GM12878 (cell line): ENCODE measurements at regions of chr10 and their contacts with region 1.

Region 1: GRCh38 chr10:87861953-87862678 is 1.2 kb downstream of the KLLN start:
- DNase-seq: peak; percentile 95
- ATAC-seq: peak; percentile 55
- H3K4me3 ChIP-seq: peak overlapping the region; percentile 84
- H3K27ac ChIP-seq: peak overlapping the region; percentile 98
- H3K4me1 ChIP-seq: peaks cover 8% of the 10 kb centered on the region
- H3K27me3 ChIP-seq: no peaks in the 10 kb centered on the region
- CTCF ChIP-seq: no peak
- EP300 ChIP-seq: peak in 1 of 2 experiments; percentile 72; a peak in 2 of 4 replicates
- POLR2A ChIP-seq: peak; percentile 87
- RAD21 ChIP-seq: peak; percentile 37

Region 2: GRCh38 chr10:87635610-87636312 is 226.4 kb before region 1 on chr10:
- CTCF ChIA-PET with region 1: no interaction called
- POLR2A ChIA-PET with region 1: no interaction called
- RAD21 ChIA-PET with region 1: no interaction called
- SMC1A ChIA-PET with region 1: no interaction called
- in situ Hi-C with region 1: no loop called
- intact Hi-C with region 1: no loop called
- DNase-seq: peak; percentile 62
- ATAC-seq: peak; percentile 96
- H3K4me3 ChIP-seq: no peak overlapping the region
- H3K27ac ChIP-seq: no peak overlapping the region
- H3K4me1 ChIP-seq: no peaks in the 10 kb centered on the region
- H3K27me3 ChIP-seq: no peaks in the 10 kb centered on the region
- CTCF ChIP-seq: no peak
- EP300 ChIP-seq: no peak
- POLR2A ChIP-seq: no peak
- RAD21 ChIP-seq: no peak; the same call in 1 of the 2 replicates

Region 3: GRCh38 chr10:87817609-87818504 is 44.3 kb before region 1 on chr10 and contains the start of gene ATAD1:
- CTCF ChIA-PET with region 1: interaction called, 5 read pairs
- POLR2A ChIA-PET with region 1: interaction called, 17 read pairs
- RAD21 ChIA-PET with region 1: interaction called, 12 read pairs
- SMC1A ChIA-PET with region 1: interaction called, 7 read pairs
- in situ Hi-C with region 1: no loop called
- intact Hi-C with region 1: no loop called
- DNase-seq: peak; percentile 76
- ATAC-seq: peak; percentile 87
- H3K4me3 ChIP-seq: peak within 1 kb of the TSS; percentile 94
- H3K27ac ChIP-seq: peak within 1 kb of the TSS; percentile 98
- H3K4me1 ChIP-seq: peaks cover 4% of the 10 kb centered on the region; the same call in 1 of the 2 replicates
- H3K27me3 ChIP-seq: no peaks in the 10 kb centered on the region
- CTCF ChIP-seq: peak; percentile 22 to 32 (median 29); a peak in 5 of 6 replicates
- EP300 ChIP-seq: no peak
- POLR2A ChIP-seq: peak; percentile 88
- RAD21 ChIP-seq: no peak
- polyA plus RNA-seq, gene ATAD1: 33.6 to 35.0 TPM

Region 4: DNA sequence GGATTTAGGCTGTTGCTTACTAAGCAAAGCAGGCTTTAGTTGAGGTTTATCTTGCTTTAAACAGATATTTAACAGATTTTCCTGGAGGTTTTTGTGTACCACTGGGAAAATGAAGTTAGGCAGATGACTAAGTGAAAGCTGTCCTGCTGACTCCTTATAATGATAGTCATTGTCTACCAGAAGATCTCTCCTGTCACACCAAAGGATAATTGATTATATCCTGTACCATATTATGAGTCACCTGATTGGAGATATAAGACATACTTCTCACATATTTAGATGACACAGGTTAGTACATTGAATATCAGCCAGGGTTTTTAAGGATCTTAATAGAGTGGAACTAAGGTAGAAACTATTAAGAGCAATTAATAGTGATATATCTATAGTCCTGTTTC is 69.7 kb after region 1 on chr10:
- CTCF ChIA-PET with region 1: interaction called, 4 read pairs
- POLR2A ChIA-PET with region 1: interaction called, 6 read pairs
- RAD21 ChIA-PET with region 1: interaction called, 9 read pairs
- SMC1A ChIA-PET with region 1: interaction called, 13 read pairs
- in situ Hi-C with region 1: no loop called
- intact Hi-C with region 1: loop called (anchors 5 kb)
- DNase-seq: no peak
- ATAC-seq: peak; percentile 42
- H3K4me3 ChIP-seq: no peak overlapping the region
- H3K27ac ChIP-seq: peak overlapping the region; percentile 71
- H3K4me1 ChIP-seq: peaks cover 39% of the 10 kb centered on the region
- H3K27me3 ChIP-seq: no peaks in the 10 kb centered on the region
- CTCF ChIP-seq: no peak
- EP300 ChIP-seq: no peak
- POLR2A ChIP-seq: no peak
- RAD21 ChIP-seq: no peak

Region 5: DNA sequence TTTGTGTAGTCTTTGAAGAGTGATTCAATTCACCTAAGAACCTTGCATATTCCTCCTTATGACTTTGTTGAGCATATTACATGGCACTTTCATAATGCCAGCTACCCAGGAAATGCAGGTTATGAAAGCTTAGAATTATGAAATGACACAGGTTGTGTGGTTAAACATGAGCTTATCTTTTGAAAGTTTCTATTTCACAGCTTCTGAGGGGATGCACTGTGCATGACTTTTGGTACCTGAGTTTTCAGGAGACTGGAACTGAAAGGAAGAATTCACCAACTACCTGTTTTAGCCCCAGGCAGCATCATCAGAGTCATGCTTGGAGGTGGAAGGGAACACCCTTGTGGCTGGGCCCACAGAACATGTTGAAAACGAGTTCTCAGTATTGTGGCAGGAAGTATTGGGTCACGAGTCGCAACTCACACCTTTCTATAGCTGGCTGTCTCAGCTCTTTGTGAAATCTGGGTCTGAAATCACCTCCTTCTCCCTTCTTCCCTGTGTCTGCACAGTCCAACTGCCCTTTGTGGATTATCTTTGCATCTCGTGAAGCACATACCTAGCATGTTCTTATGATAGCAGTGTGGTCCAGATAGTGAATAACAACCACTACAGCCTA is 229.5 kb after region 1 on chr10:
- CTCF ChIA-PET with region 1: interaction called, 8 read pairs
- POLR2A ChIA-PET with region 1: interaction called, 7 read pairs
- RAD21 ChIA-PET with region 1: interaction called, 35 read pairs
- SMC1A ChIA-PET with region 1: interaction called, 31 read pairs
- in situ Hi-C with region 1: no loop called
- intact Hi-C with region 1: loop called (anchors 1 kb)
- DNase-seq: peak; percentile 98
- ATAC-seq: peak; percentile 88
- H3K4me3 ChIP-seq: 0 out of 2 replicates have a peak overlapping the region, but pooled peaks have one; percentile 20
- H3K27ac ChIP-seq: peak overlapping the region; percentile 97
- H3K4me1 ChIP-seq: peaks cover 31% of the 10 kb centered on the region
- H3K27me3 ChIP-seq: no peaks in the 10 kb centered on the region
- CTCF ChIP-seq: peak in 1 of 3 experiments; percentile 23; a peak in 1 of 6 replicates
- EP300 ChIP-seq: peak; percentile 92 to 94
- POLR2A ChIP-seq: no peak
- RAD21 ChIP-seq: peak; percentile 51

Region 6: DNA sequence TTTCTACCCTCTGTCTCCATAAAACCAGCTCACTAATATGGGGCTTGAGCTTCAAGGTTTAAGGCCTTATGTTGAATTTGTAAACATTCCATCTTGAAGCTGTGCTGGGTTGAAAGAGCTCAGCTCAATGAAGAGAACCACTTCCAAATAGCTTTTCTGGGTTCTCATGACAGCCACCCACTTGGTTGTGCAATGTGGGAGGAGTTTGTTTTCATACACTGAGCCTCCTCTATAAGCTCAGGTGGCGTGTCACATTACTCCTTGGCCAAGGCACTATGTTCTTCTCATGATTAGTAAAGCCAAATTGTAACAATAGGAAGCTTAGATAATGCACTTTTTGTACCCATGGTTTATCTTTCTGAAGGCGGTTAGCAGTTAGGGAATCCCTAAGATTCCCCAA is 266.9 kb after region 1 on chr10:
- CTCF ChIA-PET with region 1: no interaction called
- POLR2A ChIA-PET with region 1: no interaction called
- RAD21 ChIA-PET with region 1: no interaction called
- SMC1A ChIA-PET with region 1: no interaction called
- in situ Hi-C with region 1: no loop called
- intact Hi-C with region 1: no loop called
- DNase-seq: no peak
- ATAC-seq: no peak
- H3K4me3 ChIP-seq: no peak overlapping the region
- H3K27ac ChIP-seq: no peak overlapping the region
- H3K4me1 ChIP-seq: no peaks in the 10 kb centered on the region
- H3K27me3 ChIP-seq: no peaks in the 10 kb centered on the region
- CTCF ChIP-seq: no peak
- EP300 ChIP-seq: no peak
- POLR2A ChIP-seq: no peak
- RAD21 ChIP-seq: no peak

Region 7: GRCh38 chr10:88216976-88217375 is 354.9 kb after region 1 on chr10:
- CTCF ChIA-PET with region 1: interaction called, 6 read pairs
- POLR2A ChIA-PET with region 1: no interaction called
- RAD21 ChIA-PET with region 1: interaction called, 11 read pairs
- SMC1A ChIA-PET with region 1: interaction called, 4 read pairs
- in situ Hi-C with region 1: no loop called
- intact Hi-C with region 1: loop called (anchors 2 kb)
- DNase-seq: no peak
- ATAC-seq: peak; percentile 84
- H3K4me3 ChIP-seq: no peak overlapping the region
- H3K27ac ChIP-seq: no peak overlapping the region
- H3K4me1 ChIP-seq: peaks cover 3% of the 10 kb centered on the region; the same call in 1 of the 2 replicates
- H3K27me3 ChIP-seq: no peaks in the 10 kb centered on the region
- CTCF ChIP-seq: peak; percentile 15 to 33 (median 32); a peak in 4 of 6 replicates
- EP300 ChIP-seq: no peak
- POLR2A ChIP-seq: no peak
- RAD21 ChIP-seq: peak; percentile 64

Region 8: GRCh38 chr10:88392222-88392621 is 530.1 kb after region 1 on chr10:
- CTCF ChIA-PET with region 1: interaction called, 98 read pairs
- POLR2A ChIA-PET with region 1: interaction called, 53 read pairs
- RAD21 ChIA-PET with region 1: interaction called, 158 read pairs
- SMC1A ChIA-PET with region 1: interaction called, 140 read pairs
- in situ Hi-C with region 1: loop called (anchors 5 kb)
- intact Hi-C with region 1: loop called (anchors 1 kb)
- DNase-seq: peak; percentile 80
- ATAC-seq: peak; percentile 95
- H3K4me3 ChIP-seq: peak overlapping the region; percentile 28; the same call in 1 of the 2 replicates
- H3K27ac ChIP-seq: peak overlapping the region; percentile 82
- H3K4me1 ChIP-seq: peaks cover 46% of the 10 kb centered on the region
- H3K27me3 ChIP-seq: no peaks in the 10 kb centered on the region
- CTCF ChIP-seq: no peak
- EP300 ChIP-seq: no peak
- POLR2A ChIP-seq: 0 out of 2 replicates have a peak, but pooled peaks have one; percentile 30
- RAD21 ChIP-seq: peak; percentile 26